ENCODE measurements at regions of chr2 and their contacts with region 1.

Region 1: DNA sequence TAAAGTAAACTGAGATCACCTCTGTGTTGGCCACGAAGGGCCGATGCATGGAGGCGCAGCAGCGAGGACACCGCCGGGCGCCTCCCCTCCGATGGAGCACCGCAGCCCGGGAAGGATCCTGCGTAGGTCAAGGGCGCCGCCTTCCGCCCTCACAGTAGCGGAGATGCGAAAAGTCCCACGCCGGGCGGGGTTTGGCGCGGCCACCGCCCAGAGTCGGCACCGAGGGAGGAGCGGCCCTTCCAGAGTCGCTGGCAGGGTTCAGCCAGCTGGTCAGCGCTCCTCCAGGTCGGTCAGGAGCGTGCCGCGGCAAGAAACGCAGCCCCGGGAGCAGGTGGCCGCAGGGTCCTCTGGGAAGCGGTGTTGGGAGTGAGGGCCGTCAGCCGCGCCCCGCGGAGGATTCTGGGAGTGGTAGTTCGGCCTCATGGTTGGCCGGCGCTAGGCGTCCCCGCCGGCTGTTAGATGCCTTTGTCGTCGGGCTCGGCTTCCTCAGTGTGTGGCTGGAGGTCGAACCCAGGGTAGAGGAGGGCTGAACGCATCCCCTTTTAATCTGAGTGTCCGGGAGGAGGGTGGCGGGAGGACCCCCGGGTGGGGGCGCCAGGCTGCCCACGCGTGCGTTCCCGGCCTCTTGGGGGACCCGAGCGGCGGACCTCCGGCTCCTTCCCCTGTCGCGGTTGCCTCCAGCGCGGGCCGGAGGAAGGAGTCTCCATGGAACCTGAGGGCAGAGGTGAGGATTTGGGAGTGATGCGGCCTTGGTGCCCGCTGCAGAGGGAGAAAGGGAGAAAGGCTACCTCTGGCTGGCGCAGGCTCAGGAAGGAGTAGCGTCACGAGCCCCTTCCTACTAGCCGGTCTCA is at the start of gene ZNF892:
- DNase-seq: peak; percentile 53 to 89 (median 79)
- ATAC-seq: peak; percentile 90
- H3K4me3 ChIP-seq: peak within 1 kb of the TSS; percentile 74 to 97
- H3K4me3 Mint-ChIP-seq: peak within 1 kb of the TSS; percentile 94
- H3K27ac ChIP-seq: peak within 1 kb of the TSS; percentile 68 to 79
- H3K27ac Mint-ChIP-seq: peak within 1 kb of the TSS; percentile 91
- H3K4me1 ChIP-seq: peaks cover 7% of the 10 kb centered on the region
- H3K4me1 Mint-ChIP-seq: peaks cover 32% of the 10 kb centered on the region
- H3K27me3 ChIP-seq: no peaks in the 10 kb centered on the region
- H3K27me3 Mint-ChIP-seq: no peaks in the 10 kb centered on the region
- CTCF ChIP-seq: no peak
- total RNA-seq, gene ZNF892: 0.71 to 0.78 TPM

Region 2: DNA sequence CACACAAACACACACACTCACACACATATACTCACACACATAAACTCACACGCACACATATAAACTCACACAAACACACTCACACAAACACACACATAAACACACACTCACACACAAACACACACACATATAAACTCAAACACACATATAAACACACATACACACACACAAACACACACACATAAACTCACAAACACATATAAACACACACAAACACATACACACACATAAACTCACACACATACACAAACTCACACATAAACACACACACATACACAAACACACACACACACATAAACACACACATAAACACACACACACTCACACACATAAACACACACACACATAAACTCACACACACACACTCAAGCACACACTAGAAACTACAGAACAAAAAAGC is 453.8 kb before region 1 on chr2:
- CTCF ChIA-PET with region 1: no interaction called
- POLR2A ChIA-PET with region 1: no interaction called
- intact Hi-C with region 1: no loop called
- DNase-seq: no peak
- ATAC-seq: no peak
- H3K4me3 ChIP-seq: no peak overlapping the region
- H3K4me3 Mint-ChIP-seq: no peak overlapping the region
- H3K27ac ChIP-seq: no peak overlapping the region
- H3K27ac Mint-ChIP-seq: no peak overlapping the region
- H3K4me1 ChIP-seq: no peaks in the 10 kb centered on the region
- H3K4me1 Mint-ChIP-seq: no peaks in the 10 kb centered on the region
- H3K27me3 ChIP-seq: no peaks in the 10 kb centered on the region
- H3K27me3 Mint-ChIP-seq: peaks cover 16% of the 10 kb centered on the region
- CTCF ChIP-seq: no peak

Region 3: GRCh38 chr2:95115418-95115817 is 91.9 kb before region 1 on chr2:
- CTCF ChIA-PET with region 1: no interaction called
- POLR2A ChIA-PET with region 1: no interaction called
- intact Hi-C with region 1: no loop called
- DNase-seq: peak; percentile 46 to 82 (median 76)
- ATAC-seq: peak; percentile 97
- H3K4me3 ChIP-seq: no peak overlapping the region
- H3K4me3 Mint-ChIP-seq: no peak overlapping the region
- H3K27ac ChIP-seq: no peak overlapping the region
- H3K27ac Mint-ChIP-seq: peak overlapping the region; percentile 28
- H3K4me1 ChIP-seq: peaks cover 28% of the 10 kb centered on the region
- H3K4me1 Mint-ChIP-seq: peaks cover 42% of the 10 kb centered on the region
- H3K27me3 ChIP-seq: no peaks in the 10 kb centered on the region
- H3K27me3 Mint-ChIP-seq: no peaks in the 10 kb centered on the region
- CTCF ChIP-seq: peak; percentile 90

Region 4: GRCh38 chr2:95159690-95160449 is 47.5 kb before region 1 on chr2 and contains the start of gene ZNF514:
- CTCF ChIA-PET with region 1: no interaction called
- POLR2A ChIA-PET with region 1: interaction called, 3 read pairs
- intact Hi-C with region 1: loop called (anchors 1 kb)
- DNase-seq: peak; percentile 32 to 90 (median 76)
- ATAC-seq: peak; percentile 90
- H3K4me3 ChIP-seq: peak within 1 kb of the TSS; percentile 83 to 96
- H3K4me3 Mint-ChIP-seq: peak within 1 kb of the TSS; percentile 91
- H3K27ac ChIP-seq: peak within 1 kb of the TSS; percentile 61 to 70
- H3K27ac Mint-ChIP-seq: peak within 1 kb of the TSS; percentile 95
- H3K4me1 ChIP-seq: peaks cover 21% of the 10 kb centered on the region
- H3K4me1 Mint-ChIP-seq: peaks cover 25% of the 10 kb centered on the region
- H3K27me3 ChIP-seq: no peaks in the 10 kb centered on the region
- H3K27me3 Mint-ChIP-seq: no peaks in the 10 kb centered on the region
- CTCF ChIP-seq: no peak
- total RNA-seq, gene ZNF514: 9.7 to 10.2 TPM

Region 5: GRCh38 chr2:95165129-95166064 is 41.9 kb before region 1 on chr2 and contains the start of gene ZNF2:
- CTCF ChIA-PET with region 1: no interaction called
- POLR2A ChIA-PET with region 1: no interaction called
- intact Hi-C with region 1: loop called (anchors 1 kb)
- DNase-seq: peak; percentile 91 to 99 (median 98)
- ATAC-seq: peak; percentile 94
- H3K4me3 ChIP-seq: peak within 1 kb of the TSS; percentile 98
- H3K4me3 Mint-ChIP-seq: peak within 1 kb of the TSS; percentile 99
- H3K27ac ChIP-seq: peak within 1 kb of the TSS; percentile 90 to 96
- H3K27ac Mint-ChIP-seq: peak within 1 kb of the TSS; percentile 96
- H3K4me1 ChIP-seq: peaks cover 18% of the 10 kb centered on the region
- H3K4me1 Mint-ChIP-seq: peaks cover 41% of the 10 kb centered on the region
- H3K27me3 ChIP-seq: no peaks in the 10 kb centered on the region
- H3K27me3 Mint-ChIP-seq: no peaks in the 10 kb centered on the region
- CTCF ChIP-seq: no peak
- total RNA-seq, gene ZNF2: 0.25 to 0.27 TPM

Region 6: DNA sequence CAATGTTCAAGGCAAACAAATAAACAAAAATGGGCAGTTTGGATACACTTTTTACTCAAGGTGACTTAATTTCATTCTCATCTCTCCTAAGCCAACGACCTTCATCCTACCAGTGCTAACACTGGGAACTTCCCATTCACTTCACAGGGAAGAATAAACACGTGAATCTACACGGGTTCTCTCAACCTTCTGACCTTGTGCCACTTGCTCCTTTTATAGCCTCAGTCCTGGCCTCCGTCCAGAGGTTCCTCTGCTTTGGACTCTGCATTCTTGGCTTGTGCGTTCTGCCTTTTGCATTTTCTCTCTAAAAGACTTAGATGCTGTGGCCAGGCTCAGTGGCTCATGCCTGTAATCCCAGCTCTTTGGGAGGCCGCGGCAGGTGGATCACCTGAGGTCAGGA is 27.9 kb before region 1 on chr2:
- CTCF ChIA-PET with region 1: no interaction called
- POLR2A ChIA-PET with region 1: no interaction called
- intact Hi-C with region 1: no loop called
- DNase-seq: no peak
- ATAC-seq: no peak
- H3K4me3 ChIP-seq: no peak overlapping the region
- H3K4me3 Mint-ChIP-seq: no peak overlapping the region
- H3K27ac ChIP-seq: no peak overlapping the region
- H3K27ac Mint-ChIP-seq: no peak overlapping the region
- H3K4me1 ChIP-seq: no peaks in the 10 kb centered on the region
- H3K4me1 Mint-ChIP-seq: no peaks in the 10 kb centered on the region
- H3K27me3 ChIP-seq: no peaks in the 10 kb centered on the region
- H3K27me3 Mint-ChIP-seq: no peaks in the 10 kb centered on the region
- CTCF ChIP-seq: no peak

Region 7: GRCh38 chr2:95402370-95403203 is 195.3 kb after region 1 on chr2 and contains the start of gene FAHD2A:
- CTCF ChIA-PET with region 1: interaction called, 3 read pairs
- POLR2A ChIA-PET with region 1: no interaction called
- intact Hi-C with region 1: loop called in 1 of 2 experiments (anchors 1 kb)
- DNase-seq: peak; percentile 82 to 96 (median 93)
- ATAC-seq: peak; percentile 94
- H3K4me3 ChIP-seq: peak within 1 kb of the TSS; percentile 71 to 98
- H3K4me3 Mint-ChIP-seq: peak within 1 kb of the TSS; percentile 98
- H3K27ac ChIP-seq: peak within 1 kb of the TSS; percentile 61 to 75
- H3K27ac Mint-ChIP-seq: peak within 1 kb of the TSS; percentile 94
- H3K4me1 ChIP-seq: peaks cover 16% of the 10 kb centered on the region
- H3K4me1 Mint-ChIP-seq: peaks cover 27% of the 10 kb centered on the region
- H3K27me3 ChIP-seq: no peaks in the 10 kb centered on the region
- H3K27me3 Mint-ChIP-seq: no peaks in the 10 kb centered on the region
- CTCF ChIP-seq: no peak
- total RNA-seq, gene FAHD2A: 25.5 to 26.3 TPM

Measured in CD8-positive, alpha-beta T cell (primary cell).